Activated T-helper 2 cell treated with anti-CD3 and anti-CD28 coated beads, Interferon-gamma antibody, Interleukin-2, Interleukin-4, amounts not matched to agents 10 μg/mL and 5 μg/mL and 100 μg/mL, durations not matched to agents 14 hours and 24 hours and 36 hours (primary cell): ENCODE measurements at regions of chr20 and their contacts with region 1.

Region 1: GRCh38 chr20:63657937-63658748 is at the start of gene RTEL1:
- DNase-seq: peak; percentile 87
- H3K4me3 Mint-ChIP-seq: peak within 1 kb of the TSS; percentile 92
- H3K27ac Mint-ChIP-seq: peak within 1 kb of the TSS; percentile 86
- H3K4me1 Mint-ChIP-seq: peaks cover 18% of the 10 kb centered on the region
- H3K27me3 Mint-ChIP-seq: peaks cover 4% of the 10 kb centered on the region
- total RNA-seq, gene RTEL1: 44.0 and 46.9 TPM in 2 replicates

Region 2: GRCh38 chr20:63627129-63627750 is 30.9 kb before region 1 on chr20:
- intact Hi-C with region 1: loop called (anchors 1 kb)
- DNase-seq: peak; percentile 94
- H3K4me3 Mint-ChIP-seq: peak overlapping the region; percentile 99
- H3K27ac Mint-ChIP-seq: peak overlapping the region; percentile 96
- H3K4me1 Mint-ChIP-seq: peaks cover 21% of the 10 kb centered on the region
- H3K27me3 Mint-ChIP-seq: no peaks in the 10 kb centered on the region

Region 3: GRCh38 chr20:63641146-63641791 is 16.9 kb before region 1 on chr20:
- intact Hi-C with region 1: no loop called
- DNase-seq: peak; percentile 67
- H3K4me3 Mint-ChIP-seq: peak overlapping the region; percentile 67
- H3K27ac Mint-ChIP-seq: peak overlapping the region; percentile 49
- H3K4me1 Mint-ChIP-seq: peaks cover 29% of the 10 kb centered on the region
- H3K27me3 Mint-ChIP-seq: peaks cover 12% of the 10 kb centered on the region